MCF 10A (cell line): ENCODE measurements at regions of chr16 and their contacts with region 1.

Region 1: GRCh38 chr16:24041826-24042631 is 206.2 kb downstream of the PRKCB start:
- DNase-seq: peak; percentile 74
- H3K4me3 Mint-ChIP-seq: no peak overlapping the region
- H3K27ac Mint-ChIP-seq: no peak overlapping the region
- H3K4me1 Mint-ChIP-seq: no peaks in the 10 kb centered on the region
- H3K27me3 Mint-ChIP-seq: peaks cover 33% of the 10 kb centered on the region
- CTCF ChIP-seq: peak; percentile 86

Region 2: GRCh38 chr16:23941963-23942564 is 100.0 kb before region 1 on chr16:
- CTCF ChIA-PET with region 1: no interaction called
- POLR2A ChIA-PET with region 1: no interaction called
- intact Hi-C with region 1: no loop called
- DNase-seq: no peak
- H3K4me3 Mint-ChIP-seq: no peak overlapping the region
- H3K27ac Mint-ChIP-seq: no peak overlapping the region
- H3K4me1 Mint-ChIP-seq: no peaks in the 10 kb centered on the region
- H3K27me3 Mint-ChIP-seq: peaks cover 44% of the 10 kb centered on the region
- CTCF ChIP-seq: no peak

Region 3: GRCh38 chr16:23964136-23964535 is 77.9 kb before region 1 on chr16:
- CTCF ChIA-PET with region 1: no interaction called
- POLR2A ChIA-PET with region 1: no interaction called
- intact Hi-C with region 1: no loop called
- DNase-seq: no peak
- H3K4me3 Mint-ChIP-seq: no peak overlapping the region
- H3K27ac Mint-ChIP-seq: no peak overlapping the region
- H3K4me1 Mint-ChIP-seq: no peaks in the 10 kb centered on the region
- H3K27me3 Mint-ChIP-seq: peaks cover 90% of the 10 kb centered on the region
- CTCF ChIP-seq: no peak

Region 4: DNA sequence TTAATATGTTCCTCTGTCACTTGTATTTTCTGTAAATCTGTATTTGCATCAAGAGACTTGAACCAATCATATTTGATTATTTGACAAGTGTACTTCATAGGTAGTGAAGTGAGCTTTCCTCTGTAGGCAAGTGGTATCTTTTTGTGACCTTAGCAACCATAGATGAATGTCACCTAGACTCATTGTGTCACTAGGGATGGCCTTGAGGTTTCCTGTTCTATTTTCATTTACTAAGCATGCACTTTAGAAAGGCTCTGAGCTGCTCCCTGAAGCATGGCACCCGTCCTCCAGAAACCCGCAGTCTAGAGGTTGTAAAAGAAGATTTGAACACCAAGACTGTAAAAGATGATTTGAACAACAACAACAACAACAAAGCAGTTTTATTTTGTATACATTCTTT is 54.6 kb before region 1 on chr16:
- CTCF ChIA-PET with region 1: no interaction called
- POLR2A ChIA-PET with region 1: no interaction called
- intact Hi-C with region 1: no loop called
- DNase-seq: no peak
- H3K4me3 Mint-ChIP-seq: no peak overlapping the region
- H3K27ac Mint-ChIP-seq: no peak overlapping the region
- H3K4me1 Mint-ChIP-seq: peaks cover 5% of the 10 kb centered on the region
- H3K27me3 Mint-ChIP-seq: peaks cover 30% of the 10 kb centered on the region
- CTCF ChIP-seq: no peak

Region 5: DNA sequence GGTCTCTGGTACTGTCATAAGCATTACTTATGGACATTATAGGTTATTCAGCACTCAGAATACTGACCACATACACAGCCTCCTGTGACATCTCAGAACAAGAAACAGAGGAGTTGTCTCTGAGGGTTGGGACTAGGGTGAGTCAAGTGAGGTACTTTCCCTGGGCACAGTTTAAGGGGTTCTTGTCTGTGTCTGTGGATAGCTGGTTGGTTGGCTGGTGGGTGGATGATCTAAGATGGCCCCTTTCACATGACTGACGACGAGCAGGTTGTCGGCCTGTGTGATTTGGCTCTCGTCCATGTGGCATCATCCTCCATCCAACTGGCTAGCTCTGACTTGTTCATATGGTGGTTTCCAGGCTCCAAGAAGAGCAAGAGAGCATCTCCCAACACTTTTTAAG is 42.4 kb before region 1 on chr16:
- CTCF ChIA-PET with region 1: no interaction called
- POLR2A ChIA-PET with region 1: no interaction called
- intact Hi-C with region 1: no loop called
- DNase-seq: no peak
- H3K4me3 Mint-ChIP-seq: no peak overlapping the region
- H3K27ac Mint-ChIP-seq: no peak overlapping the region
- H3K4me1 Mint-ChIP-seq: no peaks in the 10 kb centered on the region
- H3K27me3 Mint-ChIP-seq: peaks cover 28% of the 10 kb centered on the region
- CTCF ChIP-seq: no peak

Region 6: DNA sequence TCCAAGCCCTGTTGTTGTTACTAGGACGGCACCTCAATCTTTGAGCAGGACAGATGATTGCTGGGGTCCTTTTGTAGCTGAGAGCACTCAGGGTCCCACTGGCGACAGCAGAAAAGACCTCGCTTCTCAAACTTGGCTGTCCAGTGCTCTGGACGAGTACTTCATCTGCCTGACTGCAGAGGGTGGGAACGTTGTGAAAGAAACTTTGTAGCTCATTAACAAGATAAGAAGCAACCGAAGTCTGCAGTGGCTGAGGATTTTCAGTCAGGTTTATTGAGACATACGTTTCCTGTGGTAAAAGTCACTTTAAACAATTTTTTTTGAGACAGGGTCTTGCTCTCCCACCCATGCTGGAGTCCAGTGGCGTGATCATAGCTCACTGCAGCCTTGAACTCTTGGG is 14.6 kb before region 1 on chr16:
- CTCF ChIA-PET with region 1: interaction called, 12 read pairs
- POLR2A ChIA-PET with region 1: no interaction called
- intact Hi-C with region 1: no loop called
- DNase-seq: no peak
- H3K4me3 Mint-ChIP-seq: no peak overlapping the region
- H3K27ac Mint-ChIP-seq: no peak overlapping the region
- H3K4me1 Mint-ChIP-seq: no peaks in the 10 kb centered on the region
- H3K27me3 Mint-ChIP-seq: peaks cover 62% of the 10 kb centered on the region
- CTCF ChIP-seq: no peak

Region 7: GRCh38 chr16:24253192-24253591 is 211.2 kb after region 1 on chr16:
- CTCF ChIA-PET with region 1: interaction called, 96 read pairs
- POLR2A ChIA-PET with region 1: no interaction called
- intact Hi-C with region 1: loop called (anchors 2 kb)
- DNase-seq: peak; percentile 60
- H3K4me3 Mint-ChIP-seq: no peak overlapping the region
- H3K27ac Mint-ChIP-seq: no peak overlapping the region
- H3K4me1 Mint-ChIP-seq: peaks cover 6% of the 10 kb centered on the region
- H3K27me3 Mint-ChIP-seq: peaks cover 52% of the 10 kb centered on the region
- CTCF ChIP-seq: peak; percentile 61

Region 8: DNA sequence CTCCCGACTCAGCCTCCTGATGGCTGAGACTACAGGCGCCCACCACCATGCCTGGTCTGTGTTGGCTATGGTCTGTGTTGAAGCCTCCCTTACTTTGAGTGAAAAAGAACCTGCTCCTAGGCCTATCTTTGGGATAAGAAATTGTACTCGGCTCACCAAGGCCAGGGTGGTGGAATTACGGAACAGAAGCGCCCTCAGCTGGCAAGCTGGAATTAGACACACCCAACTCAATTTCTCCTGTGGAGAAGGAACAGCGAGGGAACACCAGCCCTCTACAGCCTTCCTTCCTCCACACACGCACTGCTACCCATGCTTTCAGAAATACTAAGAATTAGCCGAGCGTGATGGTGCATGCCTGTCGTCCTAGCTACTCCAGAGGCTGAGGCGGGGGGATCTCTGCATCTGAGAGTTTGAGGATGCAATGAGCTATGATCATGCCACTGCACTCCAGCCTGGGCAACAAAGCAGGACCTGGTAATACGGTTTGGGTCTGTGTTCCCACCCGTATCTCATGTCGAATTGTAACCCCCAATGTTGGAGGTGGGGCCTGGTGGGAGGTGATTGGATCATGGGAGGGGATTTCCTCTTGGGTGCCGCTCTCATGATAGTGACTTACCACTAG is 457.3 kb after region 1 on chr16:
- CTCF ChIA-PET with region 1: interaction called, 508 read pairs
- POLR2A ChIA-PET with region 1: interaction called, 3 read pairs
- intact Hi-C with region 1: loop called (anchors 1 kb)
- DNase-seq: peak; percentile 66
- H3K4me3 Mint-ChIP-seq: no peak overlapping the region
- H3K27ac Mint-ChIP-seq: no peak overlapping the region
- H3K4me1 Mint-ChIP-seq: peaks cover 7% of the 10 kb centered on the region
- H3K27me3 Mint-ChIP-seq: no peaks in the 10 kb centered on the region
- CTCF ChIP-seq: peak; percentile 73